Head of caudate nucleus (tissue), 42 donors: ENCODE measurements at regions of chr7 and their contacts with region 1.

Region 1: GRCh38 chr7:130010689-130011412 is 40.3 kb downstream of the ZC3HC1 start:
- DNase-seq: peak; percentile 28 to 94 (median 84)

Region 2: DNA sequence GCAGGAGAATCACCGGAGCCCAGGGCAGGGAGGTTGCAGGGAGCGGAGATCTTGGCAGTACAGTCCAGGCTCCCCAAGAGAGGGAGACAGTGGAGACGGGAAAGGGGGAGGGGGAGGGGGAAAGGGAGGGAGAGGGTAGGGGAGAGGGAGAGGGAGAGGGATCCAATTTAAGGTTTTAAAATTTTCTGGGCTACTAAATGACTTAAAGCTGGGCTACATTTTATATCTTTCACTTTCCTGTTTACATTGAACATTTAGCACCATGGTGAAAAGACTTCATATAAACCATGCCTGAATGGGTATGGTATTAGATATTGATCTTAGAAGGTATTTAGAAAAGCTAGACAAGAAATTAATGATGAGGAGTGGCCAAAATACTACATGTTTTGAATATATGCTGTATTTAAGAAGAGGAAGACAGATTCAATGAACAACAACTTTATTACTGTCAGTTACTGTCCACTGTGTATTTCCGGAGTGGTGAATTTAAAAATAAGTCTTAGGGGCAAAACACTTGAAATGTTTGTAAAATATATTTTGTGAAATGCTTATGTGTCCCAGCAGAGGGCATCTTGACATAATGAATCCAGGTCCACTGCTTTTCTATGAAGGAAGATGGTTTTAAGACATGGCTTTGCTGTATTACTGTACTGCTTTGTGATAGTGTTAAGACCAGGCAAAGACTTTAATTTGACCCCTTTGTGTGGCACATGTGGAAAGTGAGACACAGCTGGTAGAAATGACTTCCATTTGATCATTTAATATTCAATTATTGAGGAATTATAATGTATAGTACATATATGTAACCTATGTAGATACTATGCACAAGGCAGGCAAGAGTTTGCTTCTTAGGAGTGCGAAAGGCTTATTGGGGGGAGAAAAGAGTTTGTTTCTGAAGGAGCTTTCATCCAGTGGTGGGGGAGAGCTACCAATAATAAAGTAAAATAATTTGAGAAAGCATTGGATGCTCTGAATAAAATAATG is 346.5 kb before region 1 on chr7:
- intact Hi-C with region 1: loop called (anchors 10 kb)
- DNase-seq: peak in 1 of 42 donors; percentile 33